Posterior vena cava (tissue), 2 donors: ENCODE measurements at regions of chr4 and their contacts with region 1.

Region 1: DNA sequence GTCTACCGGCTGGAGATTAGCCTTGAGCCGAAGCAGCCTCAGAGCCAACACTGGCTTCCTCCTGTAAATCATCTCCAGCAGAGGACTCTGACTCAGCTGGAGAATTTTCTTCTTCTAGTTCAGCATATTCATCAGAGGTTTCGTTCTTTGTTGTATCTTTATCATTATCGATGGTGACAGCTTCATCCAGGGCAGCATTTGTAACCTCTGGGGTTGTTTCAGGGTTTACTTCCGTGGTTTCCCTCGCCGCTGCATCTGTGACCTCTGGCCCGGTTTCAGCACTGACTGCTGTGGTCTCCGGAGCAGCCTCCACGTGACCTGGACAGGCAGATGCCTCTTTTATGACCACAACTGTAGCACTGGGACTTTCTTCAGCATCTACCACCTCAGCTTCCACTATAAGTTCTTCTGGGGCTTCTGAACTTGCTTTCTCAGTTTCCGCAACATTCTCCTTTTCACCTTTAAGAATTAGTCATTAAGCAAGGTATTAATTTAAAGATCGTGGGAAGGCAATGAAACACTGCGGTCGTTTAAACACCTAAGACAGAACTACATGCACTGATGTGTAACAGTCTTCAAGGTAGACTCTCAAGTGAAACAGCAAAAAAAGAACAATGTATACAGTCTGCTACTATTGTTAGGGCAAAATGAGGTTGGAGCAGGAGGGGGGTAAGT is 13.3 kb downstream of the MGARP start:
- DNase-seq: peak; percentile 90

Region 2: DNA sequence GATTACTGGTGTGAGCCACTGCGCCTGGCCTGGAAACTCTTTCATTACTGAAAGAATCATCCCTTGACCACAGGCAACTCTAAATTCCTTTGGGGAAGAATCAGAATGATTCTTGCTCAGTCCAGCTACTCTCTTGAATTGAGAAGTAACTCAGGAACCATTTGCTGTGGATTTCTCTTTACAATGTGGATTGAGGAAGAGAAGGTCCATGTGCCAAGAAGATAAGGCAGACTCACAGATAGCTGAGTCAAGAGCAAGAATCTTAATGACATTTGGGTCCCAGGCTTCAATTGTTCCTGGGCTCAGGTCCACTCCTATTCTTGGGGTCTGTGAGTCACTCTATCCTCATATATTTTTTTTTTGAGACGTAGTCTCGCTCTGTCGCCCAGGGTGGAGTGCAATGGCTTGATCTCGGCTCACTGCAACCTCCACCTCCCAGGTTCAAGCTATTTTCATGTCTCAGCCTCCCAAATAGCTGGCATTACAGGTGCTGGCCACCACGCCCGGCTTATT is 19.5 kb after region 1 on chr4:
- intact Hi-C with region 1: loop called in 1 of 2 experiments (anchors 1 kb)
- DNase-seq: no peak